ENCODE measurements at regions of chr20 and their contacts with region 1.

Region 1: DNA sequence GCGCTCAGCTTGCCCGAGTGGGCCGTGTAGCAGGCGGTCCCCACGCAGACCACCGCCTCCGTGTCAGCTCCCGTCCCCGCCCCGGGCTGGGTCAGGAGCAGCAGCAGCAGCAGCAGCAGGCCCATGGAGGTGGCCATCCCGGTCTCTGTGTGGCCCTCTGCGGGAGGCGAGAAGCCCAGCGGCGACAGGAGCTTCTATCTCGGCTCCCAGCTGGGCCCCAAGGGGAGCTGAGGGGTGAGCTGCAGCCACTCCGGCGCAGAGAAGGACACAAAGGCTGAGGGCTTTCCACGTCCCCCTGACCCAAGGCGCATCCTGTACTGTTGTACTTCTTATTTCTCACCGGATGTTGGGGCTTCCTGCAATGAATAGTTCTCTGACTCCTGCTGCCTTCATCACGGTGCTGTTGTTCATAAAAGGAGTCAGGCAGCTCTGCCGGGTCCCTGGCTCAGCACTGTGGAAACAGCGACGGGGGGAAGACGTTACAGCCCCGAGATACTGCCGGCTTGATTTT is at the start of gene CD93:
- DNase-seq: peak; percentile 86
- total RNA-seq, gene CD93: 40.3 TPM

Region 2: GRCh38 chr20:23132930-23133559 is 46.9 kb after region 1 on chr20:
- intact Hi-C with region 1: loop called (anchors 5 kb)
- DNase-seq: peak; percentile 78

Region 3: DNA sequence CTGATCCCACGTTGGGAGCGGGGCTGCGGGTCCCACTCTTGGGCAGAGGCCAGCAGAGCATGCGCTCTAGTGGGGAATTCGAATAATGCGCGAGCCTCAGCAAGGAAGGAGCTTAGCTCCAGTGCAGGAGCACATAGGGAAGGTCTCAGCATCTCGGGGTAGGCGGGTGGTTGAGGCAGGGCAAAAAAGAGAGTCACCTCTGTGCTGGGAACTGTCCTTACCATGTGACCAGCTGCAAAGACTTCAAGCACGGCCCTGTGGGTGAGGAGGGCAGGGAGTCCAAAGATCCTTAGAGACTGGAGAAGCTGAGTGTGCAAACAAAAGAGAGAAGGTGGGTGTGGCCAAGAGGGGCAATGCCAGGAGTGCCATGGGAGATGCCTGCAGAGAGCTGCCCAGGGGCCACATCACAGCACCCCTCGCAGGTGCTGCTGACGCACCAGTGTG is 79.2 kb after region 1 on chr20:
- intact Hi-C with region 1: no loop called
- DNase-seq: no peak

Measured in cardiac septum (tissue), 1 donor.